MCF 10A (cell line): ENCODE measurements at regions of chr19 and their contacts with region 1.

Region 1: DNA sequence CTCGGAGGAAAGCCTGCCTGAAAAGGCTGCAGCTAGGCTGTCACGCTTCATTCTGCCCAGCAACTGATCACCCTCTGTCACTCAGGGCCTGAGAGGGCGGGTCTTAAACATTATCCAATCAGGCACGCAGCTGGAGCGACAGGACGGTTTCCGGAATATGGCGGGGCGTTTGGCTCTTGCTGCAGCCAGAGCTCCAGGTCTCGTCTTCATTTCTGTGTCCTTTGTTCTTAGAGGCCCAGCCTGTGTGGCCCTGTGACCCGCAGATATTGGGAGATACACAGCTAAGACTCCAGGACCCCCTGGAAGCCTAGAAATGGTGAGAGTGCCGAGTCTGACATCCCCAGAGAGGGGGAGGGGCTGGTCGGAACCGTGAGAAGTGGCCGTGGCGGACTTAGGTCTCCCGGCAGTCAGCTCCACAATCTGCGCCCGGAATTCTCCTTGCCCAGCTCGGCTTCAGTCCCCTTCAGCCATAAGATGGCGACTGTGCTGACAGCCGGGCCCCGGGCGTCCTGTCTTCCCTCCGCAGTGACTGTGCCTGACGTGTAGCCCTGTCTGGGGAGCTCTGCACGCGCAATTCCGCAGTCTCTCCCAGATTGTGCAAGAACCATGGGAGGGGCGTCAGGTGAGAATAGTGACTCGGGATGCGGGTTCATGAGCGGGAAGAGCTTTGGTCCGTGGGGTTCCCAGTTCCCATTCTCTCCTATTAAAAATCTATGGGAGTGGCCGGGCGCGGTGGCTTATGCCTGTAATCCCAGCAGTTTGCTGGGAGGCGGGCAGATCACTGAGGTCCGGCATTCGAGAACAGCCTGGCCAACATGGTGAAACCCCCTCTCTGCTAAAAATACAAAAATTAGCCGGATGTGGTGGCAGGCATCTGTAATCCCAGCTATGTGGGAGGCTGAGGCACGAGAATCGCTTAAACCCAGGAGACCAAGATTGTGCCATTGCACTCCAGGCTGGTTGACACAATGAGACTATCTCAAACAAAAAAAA is at the start of gene ZNF429:
- DNase-seq: peak; percentile 90
- H3K4me3 Mint-ChIP-seq: peak within 1 kb of the TSS; percentile 92
- H3K27ac Mint-ChIP-seq: peak within 1 kb of the TSS; percentile 95
- H3K4me1 Mint-ChIP-seq: no peaks in the 10 kb centered on the region
- H3K27me3 Mint-ChIP-seq: no peaks in the 10 kb centered on the region
- CTCF ChIP-seq: no peak
- total RNA-seq, gene ZNF429: 3.7 and 4.0 TPM in 2 replicates

Region 2: DNA sequence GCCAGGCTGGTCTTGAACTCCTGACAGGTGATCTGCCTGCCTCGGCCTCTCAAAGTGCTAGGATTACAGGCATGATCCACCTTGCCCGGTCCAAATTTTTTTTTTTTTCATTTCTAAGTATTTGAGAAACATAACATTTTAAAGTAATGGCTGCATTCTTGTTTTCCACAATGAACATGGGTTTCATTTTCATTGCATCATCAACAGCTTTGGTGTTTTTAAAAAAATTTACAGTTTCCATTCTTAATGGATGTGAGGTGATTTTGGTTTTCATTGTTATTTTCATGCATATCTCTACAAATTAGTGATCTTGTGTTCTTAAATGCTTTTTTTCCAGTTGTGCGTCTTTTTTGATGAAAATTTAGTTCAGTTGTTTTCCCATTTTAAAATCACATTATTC is 27.1 kb after region 1 on chr19:
- CTCF ChIA-PET with region 1: no interaction called
- POLR2A ChIA-PET with region 1: no interaction called
- intact Hi-C with region 1: no loop called
- DNase-seq: no peak
- H3K4me3 Mint-ChIP-seq: no peak overlapping the region
- H3K27ac Mint-ChIP-seq: no peak overlapping the region
- H3K4me1 Mint-ChIP-seq: no peaks in the 10 kb centered on the region
- H3K27me3 Mint-ChIP-seq: no peaks in the 10 kb centered on the region
- CTCF ChIP-seq: no peak

Region 3: DNA sequence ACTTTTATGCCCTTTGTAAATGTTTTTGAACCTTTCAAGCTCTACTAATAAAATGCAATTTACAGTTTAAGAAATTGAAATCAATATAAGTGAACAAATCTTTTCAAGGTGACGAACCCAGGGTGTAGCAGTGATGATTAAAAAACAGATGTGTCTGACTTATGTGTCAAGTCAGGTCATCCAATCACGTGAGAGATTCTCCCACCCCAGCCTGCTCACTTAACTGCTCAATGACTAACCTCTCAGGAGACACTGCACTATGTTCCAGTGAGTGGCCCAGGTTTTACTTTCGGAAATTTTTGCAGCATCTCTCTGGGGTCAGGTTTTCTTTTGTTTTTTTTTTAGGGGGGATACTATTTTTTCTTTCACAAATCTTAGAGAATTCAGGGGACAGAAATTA is 60.3 kb after region 1 on chr19:
- CTCF ChIA-PET with region 1: interaction called, 6 read pairs
- POLR2A ChIA-PET with region 1: interaction called, 18 read pairs
- intact Hi-C with region 1: no loop called
- DNase-seq: no peak
- H3K4me3 Mint-ChIP-seq: no peak overlapping the region
- H3K27ac Mint-ChIP-seq: no peak overlapping the region
- H3K4me1 Mint-ChIP-seq: no peaks in the 10 kb centered on the region
- H3K27me3 Mint-ChIP-seq: no peaks in the 10 kb centered on the region
- CTCF ChIP-seq: no peak

Region 4: DNA sequence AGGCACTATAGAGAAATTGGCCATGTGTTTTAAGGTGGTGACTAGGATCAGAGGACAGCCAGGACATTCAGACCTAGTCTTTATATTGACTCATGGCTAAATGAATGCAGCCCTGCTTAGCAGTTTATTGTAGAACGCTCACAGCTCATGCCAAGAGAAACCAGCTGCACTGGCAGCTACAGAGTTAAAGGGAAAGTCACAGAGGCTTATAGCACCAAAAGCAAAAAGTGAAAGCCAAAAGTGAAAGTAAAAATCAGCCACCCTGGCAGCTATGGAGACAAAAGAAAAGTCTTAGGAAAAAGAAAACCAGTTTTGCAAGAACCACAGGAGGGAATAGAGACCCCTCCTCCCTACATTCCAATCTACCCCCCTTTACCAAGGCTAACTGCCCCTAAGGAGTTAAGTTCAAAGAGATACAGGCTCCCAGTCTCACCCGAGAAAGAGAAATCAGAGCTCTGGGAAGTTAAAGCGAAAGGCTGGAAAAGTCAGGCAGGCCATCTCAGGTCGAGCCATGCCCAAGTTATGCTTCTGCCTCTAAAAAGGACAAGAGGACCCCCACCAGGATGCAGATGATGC is 98.7 kb after region 1 on chr19:
- CTCF ChIA-PET with region 1: no interaction called
- POLR2A ChIA-PET with region 1: interaction called, 21 read pairs
- intact Hi-C with region 1: no loop called
- DNase-seq: peak; percentile 11
- H3K4me3 Mint-ChIP-seq: peak overlapping the region; percentile 78
- H3K27ac Mint-ChIP-seq: peak overlapping the region; percentile 75
- H3K4me1 Mint-ChIP-seq: peaks cover 17% of the 10 kb centered on the region
- H3K27me3 Mint-ChIP-seq: no peaks in the 10 kb centered on the region
- CTCF ChIP-seq: no peak

Region 5: DNA sequence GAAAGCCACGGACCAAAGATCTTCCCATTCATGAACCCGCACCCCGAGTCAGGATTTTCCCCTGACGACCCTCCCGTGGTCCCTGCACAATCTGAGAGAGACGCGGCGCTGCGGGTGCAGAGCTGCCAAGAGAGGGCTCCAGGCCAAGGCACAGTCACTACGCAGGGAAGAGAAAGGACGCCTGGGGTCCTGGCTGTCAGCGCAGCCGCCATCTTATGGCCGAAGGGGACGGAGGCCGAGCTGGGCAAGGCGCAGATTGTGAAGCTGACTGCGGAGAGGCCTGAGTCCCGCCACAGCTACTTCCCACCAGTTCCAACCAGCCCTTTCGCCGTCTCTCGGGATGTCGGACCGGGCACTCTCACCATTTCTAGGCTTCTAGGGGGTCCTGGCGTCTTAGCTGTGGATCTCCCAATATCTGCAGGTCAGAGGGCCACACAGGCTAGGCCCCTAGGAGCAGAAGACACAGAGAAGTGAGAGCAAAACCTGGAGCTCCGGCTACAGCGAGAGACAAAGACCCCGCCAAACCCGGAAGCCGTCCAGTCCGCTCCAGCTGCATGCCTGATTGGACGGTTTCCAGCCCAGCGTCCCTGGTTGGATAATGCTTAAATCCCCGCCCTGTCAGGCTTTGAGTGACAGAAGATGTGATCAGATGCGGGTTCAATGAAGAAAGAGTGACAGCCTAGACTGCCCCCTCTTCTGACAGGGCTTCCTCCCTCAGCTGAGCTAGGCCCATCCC is 261.5 kb after region 1 on chr19 and contains the start of gene ZNF100:
- CTCF ChIA-PET with region 1: no interaction called
- POLR2A ChIA-PET with region 1: interaction called, 6 read pairs
- intact Hi-C with region 1: loop called (anchors 5 kb)
- DNase-seq: peak; percentile 96
- H3K4me3 Mint-ChIP-seq: peak within 1 kb of the TSS; percentile 96
- H3K27ac Mint-ChIP-seq: peak within 1 kb of the TSS; percentile 96
- H3K4me1 Mint-ChIP-seq: peaks cover 9% of the 10 kb centered on the region
- H3K27me3 Mint-ChIP-seq: no peaks in the 10 kb centered on the region
- CTCF ChIP-seq: no peak
- total RNA-seq, gene ZNF100: 9.3 and 9.9 TPM in 2 replicates